ENCODE measurements at regions of chr19 and their contacts with region 1.

Region 1: GRCh38 chr19:10695401-10696398 is 5.5 kb upstream of the QTRT1 start:
- DNase-seq: peak; percentile 94
- H3K4me3 Mint-ChIP-seq: peak overlapping the region; percentile 59
- H3K27ac Mint-ChIP-seq: no peak overlapping the region
- H3K4me1 Mint-ChIP-seq: peaks cover 15% of the 10 kb centered on the region
- H3K27me3 Mint-ChIP-seq: peaks cover 13% of the 10 kb centered on the region

Region 2: DNA sequence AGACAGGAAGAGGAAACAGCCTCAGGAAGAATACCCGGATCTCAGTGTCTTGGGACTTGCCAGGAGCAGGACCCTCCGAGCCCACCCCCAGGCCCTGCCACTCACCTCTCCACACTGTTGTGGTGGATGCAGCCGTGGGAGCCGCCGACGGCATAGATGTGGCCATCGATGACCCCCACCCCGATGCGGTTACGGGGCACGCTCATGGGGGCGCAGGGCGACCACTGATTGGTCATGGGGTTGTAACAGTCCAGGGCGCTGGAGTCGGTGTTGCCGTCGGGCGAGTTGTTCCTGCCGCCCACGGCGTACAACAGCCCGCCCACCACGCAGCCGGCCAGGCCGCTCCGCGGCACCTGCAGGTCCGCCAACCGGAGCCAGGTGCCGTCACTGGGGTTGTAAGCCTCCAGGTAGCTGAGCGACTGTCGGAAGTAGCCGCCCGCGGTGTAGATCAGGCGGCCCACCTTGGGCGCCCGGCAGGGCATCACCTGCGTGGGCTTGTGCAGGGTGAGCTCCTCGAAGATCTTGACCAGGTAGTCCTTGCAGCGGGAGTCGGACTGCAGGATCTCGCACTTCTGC is 204.1 kb before region 1 on chr19:
- CTCF ChIA-PET with region 1: interaction called, 15 read pairs
- POLR2A ChIA-PET with region 1: no interaction called
- intact Hi-C with region 1: no loop called
- DNase-seq: no peak
- H3K4me3 Mint-ChIP-seq: no peak overlapping the region
- H3K27ac Mint-ChIP-seq: no peak overlapping the region
- H3K4me1 Mint-ChIP-seq: peaks cover 4% of the 10 kb centered on the region
- H3K27me3 Mint-ChIP-seq: no peaks in the 10 kb centered on the region

Region 3: GRCh38 chr19:10510301-10510802 is 185.3 kb before region 1 on chr19:
- CTCF ChIA-PET with region 1: interaction called, 21 read pairs
- POLR2A ChIA-PET with region 1: no interaction called
- intact Hi-C with region 1: loop called (anchors 5 kb)
- DNase-seq: peak; percentile 72
- H3K4me3 Mint-ChIP-seq: no peak overlapping the region
- H3K27ac Mint-ChIP-seq: no peak overlapping the region
- H3K4me1 Mint-ChIP-seq: peaks cover 15% of the 10 kb centered on the region
- H3K27me3 Mint-ChIP-seq: peaks cover 23% of the 10 kb centered on the region

Region 4: DNA sequence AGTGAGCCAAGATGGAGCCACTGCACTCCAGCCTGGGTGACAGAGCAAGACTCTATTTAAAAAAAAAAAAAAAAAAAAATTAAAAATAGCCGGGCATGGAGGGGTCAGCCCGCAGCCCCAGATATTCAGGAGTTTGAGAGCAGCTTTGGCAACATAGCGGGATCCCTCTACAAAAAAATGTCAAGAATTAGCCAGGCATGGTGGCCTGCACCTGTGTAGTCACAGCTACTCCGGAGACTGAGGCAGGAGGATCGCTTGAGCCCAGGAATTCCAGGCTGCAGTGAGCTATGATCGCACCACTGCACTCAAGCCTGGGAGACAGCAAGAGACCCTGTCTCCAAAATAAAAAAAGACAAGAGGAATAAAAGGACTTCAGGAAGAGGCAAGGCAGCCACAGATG is 109.3 kb before region 1 on chr19:
- CTCF ChIA-PET with region 1: interaction called, 210 read pairs
- POLR2A ChIA-PET with region 1: no interaction called
- intact Hi-C with region 1: loop called (anchors 1 kb)
- DNase-seq: no peak
- H3K4me3 Mint-ChIP-seq: no peak overlapping the region
- H3K27ac Mint-ChIP-seq: no peak overlapping the region
- H3K4me1 Mint-ChIP-seq: peaks cover 6% of the 10 kb centered on the region
- H3K27me3 Mint-ChIP-seq: peaks cover 6% of the 10 kb centered on the region

Region 5: GRCh38 chr19:10653715-10654492 is 41.8 kb before region 1 on chr19 and contains the start of gene ILF3:
- CTCF ChIA-PET with region 1: interaction called, 51 read pairs
- POLR2A ChIA-PET with region 1: interaction called, 8 read pairs
- intact Hi-C with region 1: loop called (anchors 2 kb)
- DNase-seq: peak; percentile 100
- H3K4me3 Mint-ChIP-seq: peak within 1 kb of the TSS; percentile 90
- H3K27ac Mint-ChIP-seq: peak within 1 kb of the TSS; percentile 96
- H3K4me1 Mint-ChIP-seq: peaks cover 35% of the 10 kb centered on the region
- H3K27me3 Mint-ChIP-seq: no peaks in the 10 kb centered on the region
- total RNA-seq, gene ILF3: 355 to 357 TPM

Region 6: GRCh38 chr19:10682397-10683063 is 13.2 kb before region 1 on chr19:
- CTCF ChIA-PET with region 1: interaction called, 26 read pairs
- POLR2A ChIA-PET with region 1: no interaction called
- intact Hi-C with region 1: no loop called
- DNase-seq: no peak
- H3K4me3 Mint-ChIP-seq: no peak overlapping the region
- H3K27ac Mint-ChIP-seq: no peak overlapping the region
- H3K4me1 Mint-ChIP-seq: no peaks in the 10 kb centered on the region
- H3K27me3 Mint-ChIP-seq: no peaks in the 10 kb centered on the region